ENCODE measurements at regions of chr14 and their contacts with region 1.

Region 1: GRCh38 chr14:67166450-67166853 is 22.8 kb upstream of the GARIN2 start:
- DNase-seq: peak; percentile 24
- ATAC-seq: peak; percentile 72
- H3K4me3 ChIP-seq: no peak overlapping the region
- H3K27ac ChIP-seq: no peak overlapping the region
- H3K4me1 ChIP-seq: peaks cover 4 to 12% of the 10 kb centered on the region in 2 experiments; a peak in 2 of 4 replicates
- H3K27me3 ChIP-seq: no peaks in the 10 kb centered on the region
- CTCF ChIP-seq: peak; percentile 79 to 89 (median 87)
- POLR2A ChIP-seq: no peak
- RAD21 ChIP-seq: peak; percentile 94

Region 2: DNA sequence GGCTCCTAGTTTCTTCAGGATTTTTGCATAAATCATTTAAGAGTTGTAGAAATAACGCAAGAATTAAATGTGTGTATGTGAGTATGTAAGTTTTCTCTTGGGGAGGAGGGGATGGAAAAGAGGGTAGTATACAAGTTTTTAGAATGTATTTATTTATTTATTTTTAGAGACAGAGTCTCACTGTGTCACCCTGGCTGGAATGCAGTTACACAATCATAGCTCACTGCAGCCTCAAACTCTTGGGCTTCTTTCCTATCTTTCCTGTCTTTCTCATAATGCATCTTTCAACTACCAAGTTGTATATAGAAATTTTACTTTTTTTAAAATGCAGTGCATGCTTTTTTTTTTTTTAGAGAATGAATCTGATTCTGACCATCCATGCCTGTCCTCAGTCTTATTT is 246.3 kb before region 1 on chr14:
- CTCF ChIA-PET with region 1: no interaction called
- POLR2A ChIA-PET with region 1: no interaction called
- RAD21 ChIA-PET with region 1: no interaction called
- intact Hi-C with region 1: no loop called
- DNase-seq: no peak
- ATAC-seq: no peak
- H3K4me3 ChIP-seq: no peak overlapping the region
- H3K27ac ChIP-seq: no peak overlapping the region
- H3K4me1 ChIP-seq: no peaks in the 10 kb centered on the region
- H3K27me3 ChIP-seq: no peaks in the 10 kb centered on the region
- CTCF ChIP-seq: no peak
- POLR2A ChIP-seq: no peak
- RAD21 ChIP-seq: no peak

Region 3: GRCh38 chr14:67285876-67286452 is 119.5 kb after region 1 on chr14:
- CTCF ChIA-PET with region 1: interaction called, 52 read pairs
- POLR2A ChIA-PET with region 1: interaction called, 3 read pairs
- RAD21 ChIA-PET with region 1: interaction called, 4 to 10 read pairs
- intact Hi-C with region 1: loop called (anchors 1 kb)
- DNase-seq: peak; percentile 39
- ATAC-seq: no peak
- H3K4me3 ChIP-seq: no peak overlapping the region
- H3K27ac ChIP-seq: no peak overlapping the region
- H3K4me1 ChIP-seq: no peaks in the 10 kb centered on the region
- H3K27me3 ChIP-seq: no peaks in the 10 kb centered on the region
- CTCF ChIP-seq: peak; percentile 23 to 56 (median 55); a peak in 4 of 6 replicates
- POLR2A ChIP-seq: no peak
- RAD21 ChIP-seq: peak; percentile 70

Region 4: GRCh38 chr14:67335781-67336180 is 169.3 kb after region 1 on chr14:
- CTCF ChIA-PET with region 1: interaction called, 19 read pairs
- POLR2A ChIA-PET with region 1: no interaction called
- RAD21 ChIA-PET with region 1: no interaction called
- intact Hi-C with region 1: loop called (anchors 1 kb)
- DNase-seq: peak; percentile 36
- ATAC-seq: peak; percentile 54; the same call in 1 of the 2 replicates
- H3K4me3 ChIP-seq: no peak overlapping the region
- H3K27ac ChIP-seq: no peak overlapping the region
- H3K4me1 ChIP-seq: peaks cover 0 to 8% of the 10 kb centered on the region in 2 experiments; a peak in 1 of 4 replicates
- H3K27me3 ChIP-seq: no peaks in the 10 kb centered on the region
- CTCF ChIP-seq: peak; percentile 40 to 75 (median 64); a peak in 5 of 6 replicates
- POLR2A ChIP-seq: no peak
- RAD21 ChIP-seq: peak; percentile 61

Region 5: GRCh38 chr14:67477926-67478799 is 311.7 kb after region 1 on chr14:
- CTCF ChIA-PET with region 1: no interaction called
- POLR2A ChIA-PET with region 1: no interaction called
- RAD21 ChIA-PET with region 1: no interaction called
- intact Hi-C with region 1: no loop called
- DNase-seq: no peak
- ATAC-seq: no peak
- H3K4me3 ChIP-seq: no peak overlapping the region
- H3K27ac ChIP-seq: no peak overlapping the region; the same call in 1 of the 2 replicates
- H3K4me1 ChIP-seq: peaks cover 0 to 5% of the 10 kb centered on the region in 2 experiments; a peak in 1 of 4 replicates
- H3K27me3 ChIP-seq: no peaks in the 10 kb centered on the region
- CTCF ChIP-seq: no peak
- POLR2A ChIP-seq: no peak
- RAD21 ChIP-seq: no peak

Measured in HCT116 (cell line).